ENCODE measurements at regions of chr20 and their contacts with region 1.

Region 1: DNA sequence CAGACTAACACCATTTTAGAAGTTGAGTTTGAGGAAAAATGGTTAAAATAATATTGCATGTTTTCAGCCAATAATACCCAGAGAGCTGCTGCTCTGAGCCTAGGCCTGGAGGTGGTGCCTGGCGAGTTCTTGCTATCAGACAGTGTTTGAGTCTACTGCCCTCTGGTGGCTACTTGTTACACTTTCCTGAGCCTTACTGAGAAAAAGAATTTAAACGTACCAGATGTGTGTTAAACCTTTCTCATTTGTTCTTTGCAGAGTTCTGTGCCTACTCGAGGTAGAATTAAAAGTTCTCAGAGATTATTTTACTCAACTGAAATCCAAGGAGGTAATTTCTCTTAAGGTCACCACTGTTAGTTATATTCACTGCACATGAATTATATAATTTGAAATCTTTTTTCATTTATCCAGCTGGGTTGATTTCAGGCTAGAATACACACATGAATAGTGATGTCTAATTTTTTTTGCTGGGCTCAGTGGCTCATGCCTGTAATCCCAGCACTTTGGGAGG is 38.2 kb downstream of the SHLD1 start:
- DNase-seq: peak; percentile 71
- ATAC-seq: peak; percentile 94

Region 2: GRCh38 chr20:5001174-5002076 is 787.0 kb before region 1 on chr20 and contains the start of gene SLC23A2:
- intact Hi-C with region 1: no loop called
- DNase-seq: peak; percentile 75
- ATAC-seq: peak; percentile 94
- total RNA-seq, gene SLC23A2: 6.4 TPM

Region 3: GRCh38 chr20:5569021-5569420 is 219.4 kb before region 1 on chr20:
- intact Hi-C with region 1: loop called (anchors 5 kb)
- DNase-seq: no peak
- ATAC-seq: peak; percentile 61

Region 4: DNA sequence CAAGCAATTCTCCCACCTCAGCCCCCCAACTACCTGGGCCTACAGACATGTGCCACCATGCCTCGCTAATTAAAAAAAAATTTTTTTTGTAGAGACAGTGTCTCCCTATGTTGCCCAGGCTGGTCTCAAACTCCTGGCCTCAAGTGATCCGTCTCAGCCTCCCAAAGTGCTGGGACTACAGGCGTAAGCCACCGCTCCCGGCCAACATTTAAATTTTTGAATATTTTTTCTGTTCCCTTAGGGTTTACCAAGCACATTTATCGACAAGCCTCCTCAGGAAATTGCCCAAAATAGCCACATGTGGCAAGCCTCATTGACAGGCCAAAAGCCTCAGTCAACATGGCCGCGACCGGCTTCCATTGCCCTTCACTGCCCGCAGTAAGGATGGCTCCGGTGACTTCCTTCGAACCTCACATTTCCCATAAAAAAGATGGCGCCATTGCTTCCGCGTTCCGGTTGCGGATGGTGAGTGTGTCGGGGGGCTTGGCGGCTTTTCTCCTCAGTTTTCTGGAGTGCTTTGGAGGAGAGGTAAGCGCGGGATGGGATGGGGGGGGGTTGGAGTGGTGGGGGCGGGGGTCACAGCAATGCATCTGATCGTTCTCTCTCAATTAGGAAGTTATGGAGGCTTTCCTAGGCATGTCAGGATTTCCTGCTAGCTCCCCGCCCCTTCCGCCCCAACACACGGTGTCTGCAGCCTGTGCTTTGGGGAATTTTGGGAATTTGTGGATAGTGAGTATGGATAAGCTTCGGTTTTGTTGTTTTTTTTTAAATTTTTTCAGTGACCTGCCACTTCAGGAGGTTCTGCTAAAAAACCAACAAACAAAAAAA is 38.3 kb before region 1 on chr20 and contains the start of gene SHLD1:
- intact Hi-C with region 1: no loop called
- DNase-seq: peak; percentile 88
- ATAC-seq: peak; percentile 98
- total RNA-seq, gene SHLD1: 6.9 TPM

Region 5: DNA sequence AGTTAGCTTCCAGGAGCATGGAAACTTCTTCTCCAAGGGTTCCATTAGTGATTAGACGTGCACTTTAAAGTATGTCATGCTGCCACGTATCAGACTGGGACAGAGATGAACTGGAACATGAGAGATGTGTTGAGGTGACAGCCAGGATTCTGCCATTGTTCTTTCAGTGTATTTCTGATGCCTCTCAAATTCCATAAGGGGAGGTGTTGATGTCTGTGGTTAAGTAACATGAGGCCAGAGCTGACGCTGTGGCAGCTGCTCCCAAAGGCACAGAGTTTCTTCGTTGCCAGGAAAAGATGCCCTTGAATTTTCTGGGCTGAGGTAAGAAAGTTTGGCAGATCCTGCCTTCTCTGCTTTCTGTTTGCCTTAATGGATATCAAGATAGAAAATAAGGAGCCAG is 98.3 kb after region 1 on chr20:
- intact Hi-C with region 1: no loop called
- DNase-seq: peak; percentile 57
- ATAC-seq: peak; percentile 94

Measured in left ventricle myocardium superior (tissue), 1 donor.